CD14-positive monocyte (primary cell): ENCODE measurements at regions of chr1 and their contacts with region 1.

Region 1: GRCh38 chr1:11099310-11100149 is at the start of gene EXOSC10:
- DNase-seq: peak; percentile 84 to 90 (median 85)
- H3K4me3 ChIP-seq: peak within 1 kb of the TSS; percentile 91 to 96 (median 96)
- H3K4me3 Mint-ChIP-seq: peak within 1 kb of the TSS; percentile 89 to 96
- H3K27ac ChIP-seq: peak within 1 kb of the TSS; percentile 20 to 87
- H3K27ac Mint-ChIP-seq: peak within 1 kb of the TSS; percentile 81 to 93 (median 89)
- H3K4me1 ChIP-seq: peaks cover 12 to 15% of the 10 kb centered on the region in 2 donors
- H3K4me1 Mint-ChIP-seq: peaks cover 9% of the 10 kb centered on the region
- H3K27me3 ChIP-seq: no peaks in the 10 kb centered on the region
- H3K27me3 Mint-ChIP-seq: no peaks in the 10 kb centered on the region
- CTCF ChIP-seq: no peak
- polyA plus RNA-seq, gene EXOSC10: 24.0 to 66.3 (median 27.4) TPM

Region 2: GRCh38 chr1:11019971-11020370 is 79.6 kb before region 1 on chr1:
- intact Hi-C with region 1: loop called in 1 of 2 experiments (anchors 5 kb)
- DNase-seq: no peak
- H3K4me3 ChIP-seq: no peak overlapping the region
- H3K4me3 Mint-ChIP-seq: no peak overlapping the region
- H3K27ac ChIP-seq: no peak overlapping the region
- H3K27ac Mint-ChIP-seq: peak overlapping the region in 1 of 7 donors; percentile 53
- H3K4me1 ChIP-seq: no peaks in the 10 kb centered on the region
- H3K4me1 Mint-ChIP-seq: no peaks in the 10 kb centered on the region
- H3K27me3 ChIP-seq: no peaks in the 10 kb centered on the region
- H3K27me3 Mint-ChIP-seq: peaks cover 0 to 5% (median 0%) of the 10 kb centered on the region in 3 donors
- CTCF ChIP-seq: no peak

Region 3: DNA sequence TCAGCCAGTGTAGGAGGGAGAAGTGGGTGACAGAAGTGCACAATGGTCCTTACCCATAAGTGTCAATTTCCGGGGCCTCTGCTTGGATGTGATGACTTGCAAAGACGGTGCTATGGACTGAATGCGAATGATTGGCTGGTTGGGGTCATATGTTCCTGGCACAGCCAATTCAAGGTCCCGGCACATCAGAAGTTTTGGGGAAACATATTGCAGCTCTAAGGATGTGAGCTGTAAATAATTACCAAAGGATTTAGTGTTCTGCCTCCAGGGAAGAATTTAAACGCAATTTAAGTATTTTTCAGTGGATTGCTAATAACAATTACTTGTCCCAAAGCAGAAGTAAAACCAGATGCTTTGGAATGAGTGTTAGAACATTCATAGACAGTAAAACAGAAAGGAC is 27.0 kb after region 1 on chr1:
- intact Hi-C with region 1: no loop called
- DNase-seq: no peak
- H3K4me3 ChIP-seq: no peak overlapping the region
- H3K4me3 Mint-ChIP-seq: no peak overlapping the region
- H3K27ac ChIP-seq: no peak overlapping the region
- H3K27ac Mint-ChIP-seq: no peak overlapping the region
- H3K4me1 ChIP-seq: no peaks in the 10 kb centered on the region
- H3K4me1 Mint-ChIP-seq: no peaks in the 10 kb centered on the region
- H3K27me3 ChIP-seq: no peaks in the 10 kb centered on the region
- H3K27me3 Mint-ChIP-seq: peaks cover 0 to 4% (median 0%) of the 10 kb centered on the region in 3 donors
- CTCF ChIP-seq: no peak

Region 4: GRCh38 chr1:11252538-11252937 is 153.0 kb after region 1 on chr1:
- intact Hi-C with region 1: loop called in 1 of 2 experiments (anchors 10 kb)
- DNase-seq: no peak
- H3K4me3 ChIP-seq: no peak overlapping the region
- H3K4me3 Mint-ChIP-seq: no peak overlapping the region
- H3K27ac ChIP-seq: no peak overlapping the region
- H3K27ac Mint-ChIP-seq: no peak overlapping the region
- H3K4me1 ChIP-seq: no peaks in the 10 kb centered on the region
- H3K4me1 Mint-ChIP-seq: no peaks in the 10 kb centered on the region
- H3K27me3 ChIP-seq: no peaks in the 10 kb centered on the region
- H3K27me3 Mint-ChIP-seq: peaks cover 0 to 2% (median 0%) of the 10 kb centered on the region in 3 donors
- CTCF ChIP-seq: no peak

Region 5: GRCh38 chr1:11262171-11263049 is 162.9 kb after region 1 on chr1 and contains the start of gene MTOR:
- intact Hi-C with region 1: loop called (anchors 10 kb)
- DNase-seq: peak; percentile 98 to 100 (median 99)
- H3K4me3 ChIP-seq: peak within 1 kb of the TSS; percentile 89 to 95 (median 90)
- H3K4me3 Mint-ChIP-seq: peak within 1 kb of the TSS; percentile 83 to 97
- H3K27ac ChIP-seq: peak within 1 kb of the TSS; percentile 25 to 69
- H3K27ac Mint-ChIP-seq: peak within 1 kb of the TSS; percentile 78 to 93 (median 87)
- H3K4me1 ChIP-seq: peaks cover 14 to 16% of the 10 kb centered on the region in 2 donors
- H3K4me1 Mint-ChIP-seq: peaks cover 11% of the 10 kb centered on the region
- H3K27me3 ChIP-seq: no peaks in the 10 kb centered on the region
- H3K27me3 Mint-ChIP-seq: peaks cover 1 to 7% (median 2%) of the 10 kb centered on the region in 3 donors
- CTCF ChIP-seq: no peak
- polyA plus RNA-seq, gene MTOR: 2.0 to 29.4 (median 3.3) TPM

Region 6: DNA sequence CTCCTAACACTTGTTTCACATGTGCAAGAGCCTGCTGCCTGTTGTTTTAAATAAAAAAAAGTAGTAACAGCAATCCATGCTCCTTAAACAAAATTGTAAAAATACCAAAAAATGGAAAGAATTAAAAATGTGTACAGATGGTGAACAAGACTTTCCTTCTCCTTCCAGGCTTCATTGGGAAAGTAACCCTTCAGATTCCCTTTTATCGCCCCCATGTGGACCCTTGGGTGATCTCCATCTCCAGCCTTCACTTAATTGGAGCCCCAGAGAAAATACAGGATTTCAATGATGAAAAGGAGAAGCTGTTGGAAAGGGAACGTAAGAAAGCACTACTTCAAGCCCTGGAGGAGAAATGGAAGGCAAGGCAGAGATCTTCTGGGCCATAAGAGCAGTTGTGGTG is 1144.5 kb after region 1 on chr1:
- intact Hi-C with region 1: no loop called
- DNase-seq: peak in 2 of 3 donors; percentile 10 to 16
- H3K4me3 ChIP-seq: no peak overlapping the region
- H3K4me3 Mint-ChIP-seq: no peak overlapping the region
- H3K27ac ChIP-seq: no peak overlapping the region
- H3K27ac Mint-ChIP-seq: peak overlapping the region in 1 of 7 donors; percentile 46
- H3K4me1 ChIP-seq: no peaks in the 10 kb centered on the region
- H3K4me1 Mint-ChIP-seq: peaks cover 2% of the 10 kb centered on the region
- H3K27me3 ChIP-seq: no peaks in the 10 kb centered on the region
- H3K27me3 Mint-ChIP-seq: peaks cover 0 to 3% (median 0%) of the 10 kb centered on the region in 3 donors
- CTCF ChIP-seq: peak; percentile 36